OCI-LY7 (cell line): ENCODE measurements at regions of chr5 and their contacts with region 1.

Region 1: DNA sequence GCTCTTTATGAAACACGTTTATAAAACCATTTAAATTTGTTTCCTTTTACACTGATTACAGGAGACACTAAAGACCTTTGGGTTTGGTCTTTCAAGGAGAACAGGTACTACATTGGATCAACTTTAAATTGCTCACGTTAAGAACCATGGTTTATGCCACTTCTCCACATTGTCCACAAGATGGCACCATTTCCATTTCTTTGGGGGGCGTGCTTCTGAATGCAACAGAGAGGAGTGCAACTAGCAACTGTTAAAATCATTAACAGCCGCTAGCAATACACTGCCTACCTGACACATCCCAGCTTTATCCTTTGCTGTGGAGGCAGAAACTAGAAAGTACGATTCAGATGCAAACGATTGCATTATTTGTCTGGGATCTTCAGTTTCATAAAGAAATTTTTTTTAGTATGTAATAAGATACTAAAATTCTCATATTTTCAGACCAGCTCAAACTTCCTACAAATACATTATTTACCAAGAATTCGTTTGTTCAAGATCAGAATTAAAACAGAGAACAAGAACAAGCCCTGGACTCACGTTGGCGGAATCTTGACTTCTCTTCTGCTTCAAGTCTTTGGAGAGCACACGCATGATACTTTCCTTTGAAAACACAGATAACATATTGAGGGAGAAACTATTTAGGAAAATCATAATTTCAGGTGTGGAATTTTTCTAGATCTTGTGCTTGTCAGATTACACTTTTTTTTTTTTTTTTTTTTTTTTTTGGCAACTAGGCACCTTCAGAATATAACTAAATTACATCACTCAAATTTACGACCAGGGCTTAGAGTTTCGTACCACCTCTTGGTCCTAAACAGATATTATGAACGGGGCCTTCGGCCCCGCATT is 702 bp downstream of the CDC20B start:
- DNase-seq: peak; percentile 85
- H3K4me3 ChIP-seq: peak overlapping the region; percentile 67
- H3K27ac ChIP-seq: no peak overlapping the region
- H3K4me1 ChIP-seq: peaks cover 29% of the 10 kb centered on the region
- CTCF ChIP-seq: peak; percentile 95

Region 2: GRCh38 chr5:55232985-55233928 is 61.0 kb after region 1 on chr5 and contains the start of gene CCNO:
- CTCF ChIA-PET with region 1: no interaction called
- POLR2A ChIA-PET with region 1: no interaction called
- intact Hi-C with region 1: loop called (anchors 2 kb)
- DNase-seq: peak; percentile 81
- H3K4me3 ChIP-seq: peak within 1 kb of the TSS; percentile 71
- H3K27ac ChIP-seq: no peak within 1 kb of the TSS
- H3K4me1 ChIP-seq: peaks cover 12% of the 10 kb centered on the region
- CTCF ChIP-seq: peak; percentile 29; the same call in 1 of the 2 replicates
- total RNA-seq, gene CCNO: 1.3 and 2.4 TPM in 2 replicates

Region 3: DNA sequence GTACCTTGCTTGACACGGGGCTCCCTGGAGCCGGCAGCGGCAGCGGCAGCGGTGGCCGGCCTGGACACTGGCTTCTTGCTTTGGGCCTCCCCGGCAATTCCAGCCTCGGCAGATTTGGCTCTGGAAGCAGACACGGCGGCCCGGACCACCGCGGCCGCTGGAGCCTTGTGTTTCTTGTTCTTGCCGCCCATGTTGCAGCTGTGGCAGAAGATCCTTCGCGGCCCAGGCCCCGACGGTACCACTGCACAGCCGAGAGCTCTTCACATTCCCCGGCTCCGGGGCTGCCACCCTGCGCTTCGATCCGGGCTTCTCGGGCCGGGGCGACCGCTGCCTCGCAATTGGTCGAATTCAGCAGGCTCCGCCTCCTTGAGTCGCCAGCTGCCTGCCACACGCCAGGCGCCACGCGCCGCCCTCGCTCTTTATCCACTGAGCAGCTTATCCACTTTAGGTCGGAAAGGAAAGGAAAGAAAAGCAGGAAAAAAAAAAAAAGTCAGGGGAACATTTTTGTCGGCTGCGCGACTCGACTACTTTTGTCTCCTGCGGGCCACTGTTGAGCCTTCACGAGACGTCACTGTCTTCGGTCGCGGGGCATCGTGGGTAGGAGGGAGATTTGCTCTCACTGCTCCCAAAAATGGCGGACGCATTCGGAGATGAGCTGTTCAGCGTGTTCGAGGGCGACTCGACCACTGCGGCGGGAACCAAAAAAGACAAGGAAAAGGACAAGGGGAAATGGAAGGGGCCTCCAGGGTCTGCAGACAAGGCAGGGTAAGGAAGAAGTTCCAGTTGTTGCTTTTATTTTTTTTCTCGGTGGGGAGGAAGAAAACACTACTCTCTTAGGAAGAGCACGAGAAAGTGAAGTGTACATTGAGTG is 135.3 kb after region 1 on chr5 and contains the starts of genes DHX29 and MTREX:
- CTCF ChIA-PET with region 1: no interaction called
- POLR2A ChIA-PET with region 1: no interaction called
- intact Hi-C with region 1: loop called (anchors 5 kb)
- DNase-seq: peak; percentile 89
- H3K4me3 ChIP-seq: peak within 1 kb of the TSS; percentile 91
- H3K27ac ChIP-seq: peak within 1 kb of the TSS; percentile 63
- H3K4me1 ChIP-seq: peaks cover 42% of the 10 kb centered on the region
- CTCF ChIP-seq: no peak
- total RNA-seq, gene DHX29: 12.7 and 13.2 TPM in 2 replicates
- total RNA-seq, gene MTREX: 62.7 and 84.7 TPM in 2 replicates

Region 4: DNA sequence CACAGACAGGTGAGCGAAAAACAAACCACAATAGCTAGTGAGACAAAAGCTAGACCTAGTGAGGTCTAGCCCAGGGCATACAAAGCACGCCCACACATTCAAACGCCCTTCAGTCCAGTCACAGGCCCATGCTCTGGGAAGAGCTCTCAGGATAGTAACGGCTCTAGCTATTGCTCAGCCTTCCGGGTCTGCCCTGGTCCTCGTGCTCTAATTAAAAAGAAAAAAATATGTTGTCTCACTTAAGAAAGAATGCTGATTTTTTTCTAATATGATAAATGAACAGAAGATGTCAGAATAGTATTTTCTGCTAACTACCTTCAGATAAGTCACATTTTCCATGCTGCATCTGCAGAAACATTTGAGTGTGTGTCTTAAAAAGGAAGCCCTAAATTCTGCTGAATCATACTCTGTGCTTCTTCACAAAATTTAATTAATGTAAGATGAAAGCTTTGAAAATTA is 267.9 kb after region 1 on chr5:
- CTCF ChIA-PET with region 1: no interaction called
- POLR2A ChIA-PET with region 1: no interaction called
- intact Hi-C with region 1: loop called (anchors 10 kb)
- DNase-seq: no peak
- H3K4me3 ChIP-seq: no peak overlapping the region
- H3K27ac ChIP-seq: no peak overlapping the region
- H3K4me1 ChIP-seq: no peaks in the 10 kb centered on the region
- CTCF ChIP-seq: no peak

Region 5: DNA sequence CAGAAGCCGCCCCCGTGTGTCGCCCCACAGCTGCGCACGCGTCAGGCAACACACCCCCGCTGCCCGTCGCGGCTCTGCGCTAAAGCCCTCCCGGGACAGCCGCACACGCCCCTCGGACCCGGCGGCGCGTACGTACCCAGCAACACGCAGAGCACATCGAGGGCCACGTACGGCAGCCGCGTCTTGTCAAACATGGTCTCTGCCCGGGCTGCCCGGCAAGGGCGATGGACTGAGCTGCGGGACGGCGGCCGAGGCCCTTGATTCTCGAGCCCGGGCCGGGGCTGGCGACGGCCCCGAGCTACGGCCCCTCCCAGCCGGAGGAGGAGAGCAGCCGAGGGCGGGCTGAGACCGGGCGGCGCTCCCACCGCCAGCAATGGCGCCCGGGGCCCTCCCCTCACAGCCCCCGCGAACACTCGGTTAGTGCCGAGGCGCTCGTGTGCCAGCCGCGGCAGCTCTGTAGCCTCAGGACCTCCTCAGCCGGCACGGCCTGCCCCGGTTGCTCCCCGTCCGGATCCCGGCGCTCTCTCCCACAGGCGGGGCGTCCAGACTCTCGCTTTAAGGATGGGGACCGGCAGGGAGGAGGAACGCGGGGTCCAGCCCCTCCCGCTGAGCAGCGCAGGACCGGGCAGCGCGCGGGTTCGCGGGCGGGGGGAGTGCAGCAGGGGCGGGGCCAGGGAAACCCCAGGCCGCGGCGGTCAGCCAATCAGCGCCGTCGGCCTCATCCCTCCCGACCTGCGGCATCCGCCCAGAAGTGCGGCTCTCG is 362.3 kb after region 1 on chr5 and contains the start of gene PLPP1:
- CTCF ChIA-PET with region 1: no interaction called
- POLR2A ChIA-PET with region 1: no interaction called
- intact Hi-C with region 1: loop called (anchors 10 kb)
- DNase-seq: peak; percentile 80
- H3K4me3 ChIP-seq: peak within 1 kb of the TSS; percentile 84
- H3K27ac ChIP-seq: peak within 1 kb of the TSS; percentile 8
- H3K4me1 ChIP-seq: peaks cover 31% of the 10 kb centered on the region
- CTCF ChIP-seq: no peak
- total RNA-seq, gene PLPP1: 2.3 and 2.5 TPM in 2 replicates